K562 (cell line): ENCODE measurements at regions of chr1 and their contacts with region 1.

Region 1: DNA sequence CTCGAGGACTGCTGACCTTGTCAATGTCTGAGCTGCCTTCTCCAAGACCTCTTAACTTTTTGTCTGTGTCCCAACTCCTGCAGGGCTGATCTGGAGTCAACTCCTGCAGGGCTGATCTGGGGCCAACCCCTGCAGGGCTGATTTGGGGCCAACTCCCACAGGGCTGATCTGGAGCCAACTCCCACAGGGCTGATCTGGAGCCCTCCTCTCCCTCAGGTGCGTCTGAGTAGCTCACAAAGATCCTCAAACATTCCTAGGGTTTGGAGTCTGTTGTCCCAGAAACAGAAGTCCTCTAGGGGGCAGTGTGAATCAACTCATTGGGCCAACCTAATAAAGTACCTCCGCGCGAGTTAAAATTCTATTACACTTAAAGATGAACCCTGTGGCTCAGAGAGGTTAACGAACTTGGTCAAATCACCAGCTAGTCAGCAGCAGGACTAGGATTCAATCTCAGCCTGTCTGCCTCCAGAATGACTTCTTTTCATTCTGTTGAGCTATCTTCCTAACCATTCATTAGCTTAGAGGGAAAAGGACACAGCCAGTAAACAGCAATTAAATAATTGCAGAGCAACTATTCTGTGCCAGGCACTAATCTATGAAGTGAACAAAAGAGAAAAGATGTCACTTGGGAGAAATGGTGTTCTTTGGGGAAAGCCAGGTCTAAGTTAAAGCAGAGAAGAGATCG is 17.2 kb upstream of the RLF start:
- DNase-seq: peak; percentile 65 to 86 (median 70)
- ATAC-seq: peak; percentile 97
- H3K4me3 ChIP-seq: no peak overlapping the region
- H3K27ac ChIP-seq: no peak overlapping the region
- H3K4me1 ChIP-seq: no peaks in the 10 kb centered on the region
- H3K27me3 ChIP-seq: peaks cover 0 to 3% of the 10 kb centered on the region in 2 experiments; a peak in 1 of 5 replicates
- CTCF ChIP-seq: peak; percentile 85 to 95 (median 85)
- EP300 ChIP-seq: no peak
- POLR2A ChIP-seq: no peak
- RAD21 ChIP-seq: peak; percentile 90 to 95

Region 2: GRCh38 chr1:40078512-40079333 is 65.3 kb before region 1 on chr1:
- CTCF ChIA-PET with region 1: no interaction called
- POLR2A ChIA-PET with region 1: interaction called, 4 read pairs
- in situ Hi-C with region 1: no loop called
- intact Hi-C with region 1: loop called (anchors 5 kb)
- DNase-seq: peak; percentile 69 to 81 (median 72)
- ATAC-seq: peak; percentile 91
- H3K4me3 ChIP-seq: no peak overlapping the region
- H3K27ac ChIP-seq: no peak overlapping the region
- H3K4me1 ChIP-seq: peaks cover 0 to 13% of the 10 kb centered on the region in 2 experiments; a peak in 3 of 5 replicates
- H3K27me3 ChIP-seq: no peaks in the 10 kb centered on the region
- CTCF ChIP-seq: peak; percentile 80 to 82 (median 80)
- EP300 ChIP-seq: no peak
- POLR2A ChIP-seq: no peak
- RAD21 ChIP-seq: peak; percentile 56 to 66

Region 3: DNA sequence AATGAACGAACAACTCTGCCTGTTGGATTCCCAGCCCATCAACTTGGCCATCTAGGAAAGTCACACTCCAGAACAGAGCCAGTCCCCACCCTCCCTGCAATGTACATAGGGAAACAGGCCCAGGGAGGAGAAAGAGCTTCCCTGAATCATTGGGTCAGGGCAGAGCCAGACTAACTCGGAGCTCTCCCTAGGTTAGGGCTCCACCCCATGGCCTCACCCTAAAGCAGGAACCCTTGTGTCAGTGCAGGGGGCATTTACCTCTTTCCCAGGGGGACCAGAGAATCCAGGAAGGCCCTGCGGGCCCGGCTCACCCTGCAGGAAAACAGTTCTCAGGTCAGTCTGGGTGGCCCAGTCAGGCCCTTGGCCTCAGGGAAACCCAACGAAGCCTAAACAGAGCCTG is 161.4 kb after region 1 on chr1:
- CTCF ChIA-PET with region 1: interaction called, 11 read pairs
- POLR2A ChIA-PET with region 1: no interaction called
- in situ Hi-C with region 1: no loop called
- intact Hi-C with region 1: loop called (anchors 1 kb)
- DNase-seq: peak in 2 of 4 experiments; percentile 55 to 62
- ATAC-seq: peak; percentile 84
- H3K4me3 ChIP-seq: no peak overlapping the region
- H3K27ac ChIP-seq: no peak overlapping the region
- H3K4me1 ChIP-seq: peaks cover 0 to 20% of the 10 kb centered on the region in 2 experiments; a peak in 1 of 5 replicates
- H3K27me3 ChIP-seq: peaks cover 0 to 10% of the 10 kb centered on the region in 2 experiments; a peak in 2 of 5 replicates
- CTCF ChIP-seq: peak; percentile 74 to 78 (median 76)
- EP300 ChIP-seq: no peak
- POLR2A ChIP-seq: no peak
- RAD21 ChIP-seq: peak; percentile 36 to 89; a peak in 3 of 4 replicates

Region 4: DNA sequence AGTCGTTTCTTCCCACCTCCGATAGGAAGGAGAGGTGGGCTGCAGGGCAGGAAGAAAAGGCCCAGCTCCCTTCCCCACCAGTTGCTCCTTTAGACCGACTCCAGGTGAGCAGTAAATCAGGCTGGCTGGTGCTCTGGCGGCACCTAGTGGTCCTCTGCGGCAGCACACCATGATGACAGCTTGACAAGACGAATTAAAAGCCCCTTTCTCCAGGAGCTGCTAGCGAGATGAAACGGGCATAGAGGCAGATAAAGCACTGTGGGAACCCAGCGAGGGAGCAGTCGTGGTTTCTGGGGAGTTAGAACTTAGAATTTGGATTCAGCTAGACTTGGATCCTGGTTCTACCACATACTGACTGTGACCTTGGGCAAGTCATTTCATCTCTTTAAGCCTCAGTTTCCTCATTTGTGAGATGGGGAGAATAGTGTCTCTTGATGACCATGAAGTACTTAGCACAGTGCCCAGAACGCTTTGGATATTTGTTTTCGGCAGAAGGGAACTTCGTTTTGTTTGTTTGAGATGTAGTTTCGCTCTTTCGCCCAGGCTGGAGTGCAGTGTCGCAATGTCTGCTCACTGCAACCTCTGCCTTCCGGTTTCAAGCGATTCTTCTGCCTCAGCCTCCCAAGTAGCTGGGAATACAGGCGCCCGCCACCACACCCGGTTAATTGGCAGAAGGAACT is 194.9 kb after region 1 on chr1:
- CTCF ChIA-PET with region 1: interaction called, 9 read pairs
- POLR2A ChIA-PET with region 1: interaction called, 3 read pairs
- in situ Hi-C with region 1: no loop called
- intact Hi-C with region 1: loop called (anchors 1 kb)
- DNase-seq: peak; percentile 82 to 93 (median 84)
- ATAC-seq: peak; percentile 90
- H3K4me3 ChIP-seq: no peak overlapping the region
- H3K27ac ChIP-seq: no peak overlapping the region
- H3K4me1 ChIP-seq: peaks cover 15 to 21% of the 10 kb centered on the region in 2 experiments; a peak in 4 of 5 replicates
- H3K27me3 ChIP-seq: no peaks in the 10 kb centered on the region
- CTCF ChIP-seq: peak; percentile 96 to 100 (median 98)
- EP300 ChIP-seq: no peak
- POLR2A ChIP-seq: no peak
- RAD21 ChIP-seq: peak; percentile 93 to 97